WTC11 (cell line): ENCODE measurements at regions of chr17 and their contacts with region 1.

Region 1: GRCh38 chr17:49556223-49556971 is 19.3 kb upstream of the NXPH3 start:
- DNase-seq: peak; percentile 94
- ATAC-seq: peak; percentile 89
- H3K4me3 Mint-ChIP-seq: no peak overlapping the region
- H3K27ac Mint-ChIP-seq: no peak overlapping the region
- H3K4me1 Mint-ChIP-seq: peaks cover 13% of the 10 kb centered on the region
- H3K27me3 Mint-ChIP-seq: peaks cover 8% of the 10 kb centered on the region
- CTCF ChIP-seq: peak; percentile 96

Region 2: GRCh38 chr17:49125449-49125848 is 430.9 kb before region 1 on chr17:
- CTCF ChIA-PET with region 1: no interaction called
- POLR2A ChIA-PET with region 1: no interaction called
- DNase-seq: no peak
- ATAC-seq: no peak
- H3K4me3 Mint-ChIP-seq: no peak overlapping the region
- H3K27ac Mint-ChIP-seq: no peak overlapping the region
- H3K4me1 Mint-ChIP-seq: no peaks in the 10 kb centered on the region
- H3K27me3 Mint-ChIP-seq: peaks cover 41% of the 10 kb centered on the region
- CTCF ChIP-seq: no peak

Region 3: GRCh38 chr17:49407981-49408501 is 148.4 kb before region 1 on chr17:
- CTCF ChIA-PET with region 1: interaction called, 129 read pairs
- POLR2A ChIA-PET with region 1: interaction called, 4 read pairs
- DNase-seq: peak; percentile 91
- ATAC-seq: peak; percentile 99
- H3K4me3 Mint-ChIP-seq: no peak overlapping the region
- H3K27ac Mint-ChIP-seq: 0 out of 2 replicates have a peak overlapping the region, but pooled peaks have one; percentile 73
- H3K4me1 Mint-ChIP-seq: no peaks in the 10 kb centered on the region
- H3K27me3 Mint-ChIP-seq: no peaks in the 10 kb centered on the region
- CTCF ChIP-seq: peak; percentile 91

Region 4: GRCh38 chr17:49456183-49456965 is 100.0 kb before region 1 on chr17:
- CTCF ChIA-PET with region 1: interaction called, 25 read pairs
- POLR2A ChIA-PET with region 1: no interaction called
- DNase-seq: no peak
- ATAC-seq: no peak
- H3K4me3 Mint-ChIP-seq: no peak overlapping the region
- H3K27ac Mint-ChIP-seq: peak overlapping the region; percentile 6; the same call in 1 of the 2 replicates
- H3K4me1 Mint-ChIP-seq: peaks cover 31% of the 10 kb centered on the region
- H3K27me3 Mint-ChIP-seq: no peaks in the 10 kb centered on the region; the same call in 1 of the 2 replicates
- CTCF ChIP-seq: no peak

Region 5: GRCh38 chr17:49501504-49501903 is 54.9 kb before region 1 on chr17:
- CTCF ChIA-PET with region 1: interaction called, 97 read pairs
- POLR2A ChIA-PET with region 1: no interaction called
- DNase-seq: no peak
- ATAC-seq: no peak
- H3K4me3 Mint-ChIP-seq: no peak overlapping the region
- H3K27ac Mint-ChIP-seq: no peak overlapping the region
- H3K4me1 Mint-ChIP-seq: peaks cover 51% of the 10 kb centered on the region
- H3K27me3 Mint-ChIP-seq: peaks cover 51% of the 10 kb centered on the region
- CTCF ChIP-seq: no peak

Region 6: DNA sequence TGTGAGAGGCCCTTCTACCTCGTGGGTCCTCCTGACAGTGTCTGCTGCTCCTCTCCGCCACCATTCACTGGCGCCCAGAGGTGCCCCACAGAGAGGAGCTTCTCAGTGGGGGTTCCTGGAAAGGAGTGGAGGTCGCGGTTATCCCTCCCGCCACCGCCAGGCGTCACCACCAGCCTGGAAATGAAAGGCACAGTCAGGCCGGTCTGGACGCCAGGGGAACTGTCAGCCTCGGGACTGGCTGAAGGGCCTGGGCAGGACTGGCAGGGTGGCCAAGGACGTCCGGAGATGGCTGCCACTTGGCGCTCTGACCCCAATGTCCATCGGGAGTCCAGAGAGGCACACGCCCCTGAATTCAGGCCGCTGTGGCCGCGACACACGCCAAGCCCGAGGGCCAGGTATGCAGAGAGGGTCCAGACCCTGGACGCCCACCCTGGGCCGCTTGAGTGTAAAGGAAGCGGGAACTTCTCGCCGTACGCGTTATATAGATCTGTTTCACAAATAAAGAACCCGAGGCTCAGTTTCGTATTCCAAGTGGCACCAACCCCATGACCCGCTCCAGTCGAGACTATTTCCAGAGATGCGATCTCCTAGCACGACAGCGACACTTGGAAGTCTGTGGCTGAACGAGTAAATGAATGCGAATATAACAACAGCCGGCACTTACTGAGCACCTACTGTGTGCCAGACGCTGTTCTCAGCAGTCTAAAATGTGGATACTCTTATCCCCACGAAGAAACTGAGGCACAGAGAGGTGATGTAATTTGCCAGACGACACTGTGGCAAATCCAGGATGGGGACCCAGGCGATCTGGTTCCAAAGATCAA is 11.7 kb after region 1 on chr17:
- CTCF ChIA-PET with region 1: interaction called, 83 read pairs
- POLR2A ChIA-PET with region 1: no interaction called
- DNase-seq: peak; percentile 92
- ATAC-seq: peak; percentile 63
- H3K4me3 Mint-ChIP-seq: peak overlapping the region; percentile 69
- H3K27ac Mint-ChIP-seq: peak overlapping the region; percentile 32; the same call in 1 of the 2 replicates
- H3K4me1 Mint-ChIP-seq: peaks cover 29% of the 10 kb centered on the region
- H3K27me3 Mint-ChIP-seq: peaks cover 14% of the 10 kb centered on the region
- CTCF ChIP-seq: peak; percentile 97

Region 7: GRCh38 chr17:49707608-49708514 is 151.5 kb after region 1 on chr17 and contains the start of gene SLC35B1:
- CTCF ChIA-PET with region 1: interaction called, 27 read pairs
- POLR2A ChIA-PET with region 1: no interaction called
- DNase-seq: peak; percentile 99
- ATAC-seq: peak; percentile 93
- H3K4me3 Mint-ChIP-seq: peak within 1 kb of the TSS; percentile 93
- H3K27ac Mint-ChIP-seq: peak within 1 kb of the TSS; percentile 98
- H3K4me1 Mint-ChIP-seq: peaks cover 12% of the 10 kb centered on the region
- H3K27me3 Mint-ChIP-seq: no peaks in the 10 kb centered on the region; the same call in 1 of the 2 replicates
- CTCF ChIP-seq: no peak
- total RNA-seq, gene SLC35B1: 43.7 to 55.9 TPM (median 45.0 TPM) in 3 replicates